Sciatic nerve (tissue), 2 donors: ENCODE measurements at regions of chr3 and their contacts with region 1.

Region 1: DNA sequence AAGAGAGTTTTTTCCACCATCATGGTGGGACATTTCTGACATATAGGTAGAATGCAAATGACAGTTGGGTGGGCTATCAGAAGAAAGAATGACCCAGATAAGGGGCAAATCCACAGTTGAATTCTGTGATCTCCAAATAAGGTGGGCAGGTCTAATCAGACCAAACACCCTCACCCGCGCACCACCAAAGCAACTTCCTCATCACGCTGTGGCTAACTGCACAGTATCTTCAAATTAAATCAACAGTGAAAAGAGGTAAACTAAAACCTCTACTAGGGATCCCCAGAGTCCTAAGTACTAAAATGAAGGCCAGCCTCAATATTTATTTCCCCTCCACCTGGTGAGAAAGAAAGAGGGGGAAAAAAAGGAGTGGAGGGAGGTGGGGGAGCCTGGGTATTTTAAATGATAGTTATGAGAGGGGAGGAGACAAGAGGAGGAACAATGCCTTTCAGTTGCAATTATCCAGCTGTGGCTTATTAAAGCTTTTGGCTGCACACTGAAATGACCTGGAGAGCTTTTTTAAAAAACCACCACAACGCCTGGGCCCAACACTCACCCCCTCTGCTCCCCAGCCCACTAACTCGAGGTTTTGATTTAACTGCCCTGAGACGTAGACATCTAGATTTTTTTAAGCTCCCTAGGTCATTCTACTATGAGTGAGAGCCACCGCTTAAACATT is 61.0 kb downstream of the LRIG1 start:
- DNase-seq: no peak
- ATAC-seq: peak; percentile 19

Region 2: DNA sequence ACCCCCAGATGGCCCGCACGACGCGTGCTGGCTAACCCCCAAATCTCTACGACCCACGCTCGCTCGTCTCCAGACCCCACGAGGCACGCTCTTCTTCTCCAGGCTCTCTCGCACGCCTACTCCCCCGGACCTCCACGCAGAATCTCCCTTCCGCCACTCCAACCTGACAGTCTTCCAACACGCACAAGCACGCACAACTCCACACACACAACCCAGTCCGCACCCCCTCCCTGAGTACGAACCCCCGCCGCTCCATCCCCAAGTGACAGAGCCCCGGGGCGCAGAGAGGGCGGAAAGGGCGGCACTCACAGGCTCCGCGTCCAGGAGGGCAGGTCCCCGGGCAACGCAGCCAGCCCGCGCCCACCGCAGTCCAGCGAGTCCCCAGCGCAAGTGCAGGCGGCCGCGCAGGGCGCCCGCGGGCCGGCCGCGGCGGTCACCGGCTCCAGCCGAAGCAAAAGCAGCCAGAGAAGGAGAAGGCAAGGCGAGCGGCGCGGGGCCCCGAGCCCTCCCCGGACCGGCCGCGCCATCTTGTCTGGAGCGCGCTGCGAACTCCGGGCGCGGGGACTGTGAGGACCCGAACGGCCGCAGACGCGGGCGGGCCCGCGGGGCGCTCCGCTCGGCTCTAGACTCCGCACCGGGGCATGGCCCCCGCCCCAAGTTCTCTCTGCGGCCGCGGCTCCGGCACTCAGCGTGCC is 60.2 kb after region 1 on chr3:
- intact Hi-C with region 1: loop called (anchors 10 kb)
- DNase-seq: peak; percentile 72
- ATAC-seq: no peak